ENCODE measurements at regions of chr1 and their contacts with region 1.

Region 1: DNA sequence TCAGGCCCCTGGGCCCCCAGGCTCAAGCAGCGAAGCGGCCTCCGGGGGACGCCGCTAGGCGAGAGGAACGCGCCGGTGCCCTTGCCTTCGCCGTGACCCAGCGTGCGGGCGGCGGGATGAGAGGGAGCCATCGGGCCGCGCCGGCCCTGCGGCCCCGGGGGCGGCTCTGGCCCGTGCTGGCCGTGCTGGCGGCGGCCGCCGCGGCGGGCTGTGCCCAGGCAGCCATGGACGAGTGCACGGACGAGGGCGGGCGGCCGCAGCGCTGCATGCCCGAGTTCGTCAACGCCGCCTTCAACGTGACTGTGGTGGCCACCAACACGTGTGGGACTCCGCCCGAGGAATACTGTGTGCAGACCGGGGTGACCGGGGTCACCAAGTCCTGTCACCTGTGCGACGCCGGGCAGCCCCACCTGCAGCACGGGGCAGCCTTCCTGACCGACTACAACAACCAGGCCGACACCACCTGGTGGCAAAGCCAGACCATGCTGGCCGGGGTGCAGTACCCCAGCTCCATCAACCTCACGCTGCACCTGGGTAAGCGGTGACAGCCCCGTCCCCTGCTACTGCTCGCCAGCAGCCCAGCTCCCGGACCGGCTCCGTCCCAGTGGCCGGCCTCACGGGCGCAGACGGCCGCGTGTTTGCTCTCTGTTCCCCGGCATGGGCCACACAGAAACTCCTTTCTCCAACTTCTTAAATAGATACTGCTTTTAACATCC is 539 bp downstream of the LAMC1 start:
- DNase-seq: peak; percentile 81 to 87
- H3K4me3 ChIP-seq: peak overlapping the region; percentile 82
- H3K27ac ChIP-seq: peak overlapping the region; percentile 77
- H3K4me1 ChIP-seq: peaks cover 61% of the 10 kb centered on the region
- H3K27me3 ChIP-seq: no peaks in the 10 kb centered on the region
- CTCF ChIP-seq: peak; percentile 65

Region 2: GRCh38 chr1:182839209-182840065 is 184.3 kb before region 1 on chr1 and contains the start of gene DHX9:
- CTCF ChIA-PET with region 1: no interaction called
- POLR2A ChIA-PET with region 1: no interaction called
- intact Hi-C with region 1: loop called (anchors 5 kb)
- DNase-seq: peak; percentile 74 to 93
- H3K4me3 ChIP-seq: peak within 1 kb of the TSS; percentile 96
- H3K27ac ChIP-seq: peak within 1 kb of the TSS; percentile 68
- H3K4me1 ChIP-seq: peaks cover 24% of the 10 kb centered on the region
- H3K27me3 ChIP-seq: no peaks in the 10 kb centered on the region
- CTCF ChIP-seq: no peak
- total RNA-seq, gene DHX9: 101 and 131 TPM in 2 replicates

Region 3: GRCh38 chr1:182962554-182963115 is 61.1 kb before region 1 on chr1:
- CTCF ChIA-PET with region 1: interaction called, 13 read pairs
- POLR2A ChIA-PET with region 1: interaction called, 3 read pairs
- intact Hi-C with region 1: loop called (anchors 1 kb)
- DNase-seq: peak; percentile 70 to 82
- H3K4me3 ChIP-seq: peak overlapping the region; percentile 41; the same call in 1 of the 2 replicates
- H3K27ac ChIP-seq: peak overlapping the region; percentile 59
- H3K4me1 ChIP-seq: peaks cover 13% of the 10 kb centered on the region
- H3K27me3 ChIP-seq: no peaks in the 10 kb centered on the region
- CTCF ChIP-seq: peak; percentile 95

Region 4: GRCh38 chr1:183012301-183012994 is 11.3 kb before region 1 on chr1:
- CTCF ChIA-PET with region 1: no interaction called
- POLR2A ChIA-PET with region 1: no interaction called
- intact Hi-C with region 1: no loop called
- DNase-seq: no peak
- H3K4me3 ChIP-seq: no peak overlapping the region
- H3K27ac ChIP-seq: no peak overlapping the region
- H3K4me1 ChIP-seq: no peaks in the 10 kb centered on the region
- H3K27me3 ChIP-seq: no peaks in the 10 kb centered on the region
- CTCF ChIP-seq: no peak

Region 5: DNA sequence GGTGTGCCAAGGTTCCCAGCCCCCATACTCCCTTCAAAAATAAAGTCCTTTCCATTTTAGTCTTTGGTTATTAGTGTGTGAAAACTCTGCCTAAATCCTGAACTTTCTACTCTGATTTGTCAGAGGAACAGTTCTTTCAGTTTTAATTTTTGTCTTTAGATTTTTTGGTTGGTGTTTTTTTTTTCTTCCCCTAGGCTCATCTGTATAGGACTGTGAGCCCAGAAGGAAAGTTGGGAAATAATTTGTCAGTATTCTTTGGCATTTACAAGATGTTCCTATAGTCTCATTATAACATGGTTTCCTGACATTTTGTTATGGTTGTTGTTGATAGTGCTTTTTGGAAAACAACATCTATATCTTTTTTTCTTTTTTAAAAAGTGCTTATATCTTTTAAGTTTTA is 37.4 kb after region 1 on chr1:
- CTCF ChIA-PET with region 1: interaction called, 3 read pairs
- POLR2A ChIA-PET with region 1: no interaction called
- intact Hi-C with region 1: loop called (anchors 2 kb)
- DNase-seq: no peak
- H3K4me3 ChIP-seq: no peak overlapping the region
- H3K27ac ChIP-seq: no peak overlapping the region
- H3K4me1 ChIP-seq: peaks cover 50% of the 10 kb centered on the region
- H3K27me3 ChIP-seq: no peaks in the 10 kb centered on the region
- CTCF ChIP-seq: no peak

Region 6: GRCh38 chr1:183159960-183160359 is 136.2 kb after region 1 on chr1:
- CTCF ChIA-PET with region 1: no interaction called
- POLR2A ChIA-PET with region 1: no interaction called
- intact Hi-C with region 1: loop called (anchors 1 kb)
- DNase-seq: peak; percentile 97 to 99
- H3K4me3 ChIP-seq: peak overlapping the region; percentile 30; the same call in 1 of the 2 replicates
- H3K27ac ChIP-seq: peak overlapping the region; percentile 91
- H3K4me1 ChIP-seq: peaks cover 64% of the 10 kb centered on the region
- H3K27me3 ChIP-seq: no peaks in the 10 kb centered on the region
- CTCF ChIP-seq: no peak

Region 7: GRCh38 chr1:183234660-183235476 is 211.1 kb after region 1 on chr1:
- CTCF ChIA-PET with region 1: interaction called, 3 read pairs
- POLR2A ChIA-PET with region 1: no interaction called
- intact Hi-C with region 1: loop called (anchors 1 kb)
- DNase-seq: peak; percentile 81 to 96
- H3K4me3 ChIP-seq: peak overlapping the region; percentile 45; the same call in 1 of the 2 replicates
- H3K27ac ChIP-seq: peak overlapping the region; percentile 92
- H3K4me1 ChIP-seq: peaks cover 41% of the 10 kb centered on the region
- H3K27me3 ChIP-seq: no peaks in the 10 kb centered on the region
- CTCF ChIP-seq: peak; percentile 77

Region 8: GRCh38 chr1:183622884-183623785 is 599.4 kb after region 1 on chr1:
- CTCF ChIA-PET with region 1: no interaction called
- POLR2A ChIA-PET with region 1: no interaction called
- intact Hi-C with region 1: loop called (anchors 5 kb)
- DNase-seq: peak; percentile 60 to 65
- H3K4me3 ChIP-seq: no peak overlapping the region
- H3K27ac ChIP-seq: peak overlapping the region; percentile 64
- H3K4me1 ChIP-seq: peaks cover 33% of the 10 kb centered on the region
- H3K27me3 ChIP-seq: no peaks in the 10 kb centered on the region
- CTCF ChIP-seq: peak; percentile 87